Panc1 (cell line): ENCODE measurements at regions of chr10 and their contacts with region 1.

Region 1: GRCh38 chr10:97179731-97180362 is 5.9 kb downstream of the SLIT1 start:
- DNase-seq: no peak
- ATAC-seq: no peak
- H3K4me3 ChIP-seq: no peak overlapping the region
- H3K27ac ChIP-seq: no peak overlapping the region
- H3K4me1 ChIP-seq: peaks cover 4% of the 10 kb centered on the region
- H3K27me3 ChIP-seq: peaks cover 12% of the 10 kb centered on the region
- CTCF ChIP-seq: no peak

Region 2: DNA sequence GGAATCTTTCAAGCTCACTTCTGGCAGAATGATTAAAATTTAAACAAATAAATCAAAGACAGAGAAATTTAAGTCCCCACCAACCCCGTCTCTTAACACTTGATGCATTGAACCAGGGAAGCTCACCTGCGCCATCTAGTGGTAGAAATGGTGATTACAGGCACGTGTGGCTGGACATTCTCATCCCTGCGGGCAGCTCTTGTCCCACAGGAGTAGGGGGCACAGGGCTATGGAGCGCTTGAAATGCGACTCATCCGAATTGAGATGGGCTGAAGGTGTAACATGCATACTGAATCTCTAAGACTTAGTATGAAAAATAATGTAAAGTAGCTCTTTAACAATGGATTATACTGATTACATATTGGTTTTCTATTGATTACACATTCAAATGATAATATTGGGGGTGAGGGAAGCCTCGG is 30.7 kb after region 1 on chr10:
- CTCF ChIA-PET with region 1: no interaction called
- POLR2A ChIA-PET with region 1: no interaction called
- in situ Hi-C with region 1: no loop called
- intact Hi-C with region 1: no loop called
- DNase-seq: peak; percentile 78
- ATAC-seq: peak; percentile 82
- H3K4me3 ChIP-seq: no peak overlapping the region
- H3K27ac ChIP-seq: no peak overlapping the region
- H3K4me1 ChIP-seq: no peaks in the 10 kb centered on the region
- H3K27me3 ChIP-seq: no peaks in the 10 kb centered on the region
- CTCF ChIP-seq: peak; percentile 99

Region 3: GRCh38 chr10:97314671-97315070 is 134.8 kb after region 1 on chr10:
- CTCF ChIA-PET with region 1: no interaction called
- POLR2A ChIA-PET with region 1: interaction called, 14 read pairs
- in situ Hi-C with region 1: no loop called
- intact Hi-C with region 1: no loop called
- DNase-seq: no peak
- ATAC-seq: no peak
- H3K4me3 ChIP-seq: no peak overlapping the region
- H3K27ac ChIP-seq: no peak overlapping the region
- H3K4me1 ChIP-seq: no peaks in the 10 kb centered on the region
- H3K27me3 ChIP-seq: no peaks in the 10 kb centered on the region
- CTCF ChIP-seq: no peak